ENCODE measurements at regions of chr1 and their contacts with region 1.

Region 1: DNA sequence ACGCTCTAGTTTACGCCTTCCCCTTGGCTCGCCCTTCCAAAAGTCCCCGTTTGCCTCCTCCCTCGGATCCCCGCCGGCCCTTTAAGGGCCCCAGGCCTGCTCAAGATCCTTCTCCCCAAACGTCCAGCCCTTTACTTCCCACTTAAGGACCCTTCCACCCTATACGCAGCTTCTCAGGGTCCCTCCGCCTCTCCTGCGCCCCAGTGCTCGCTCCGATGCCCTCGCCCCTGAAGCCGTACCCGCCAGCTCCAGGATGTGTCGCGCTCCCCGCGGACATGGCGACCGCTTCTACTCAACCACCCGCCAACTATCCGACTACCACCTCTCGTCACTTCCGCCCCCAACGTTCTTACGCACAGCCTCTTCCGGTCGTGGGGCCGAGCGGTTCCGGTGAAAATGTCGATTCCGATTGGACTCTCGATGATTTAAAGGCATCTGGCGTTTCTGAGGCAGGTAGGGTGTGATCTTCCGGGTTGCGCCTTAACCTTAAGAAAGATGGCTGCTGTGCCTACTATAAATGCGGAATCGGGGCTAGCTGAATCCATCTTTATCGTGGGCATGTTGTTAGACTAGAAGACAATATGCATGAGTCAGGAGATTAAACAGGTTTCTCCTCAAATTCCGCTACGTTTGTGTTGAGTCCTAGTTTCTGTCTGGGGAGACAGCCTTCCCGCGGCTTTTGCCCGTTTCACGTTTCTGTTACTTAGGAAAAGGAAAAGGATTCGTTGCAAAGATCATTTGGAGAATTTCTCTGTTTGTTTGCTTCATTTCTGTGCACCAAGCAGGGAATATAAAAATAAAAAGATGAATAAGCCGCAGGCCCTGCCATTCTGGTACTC is at the start of gene KHDC4:
- DNase-seq: peak; percentile 97
- ATAC-seq: peak; percentile 95
- H3K4me3 ChIP-seq: peak within 1 kb of the TSS; percentile 68 to 90
- H3K27ac ChIP-seq: peak within 1 kb of the TSS; percentile 64 to 73
- H3K4me1 ChIP-seq: peaks cover 0 to 2% of the 10 kb centered on the region in 2 donors
- H3K27me3 ChIP-seq: no peaks in the 10 kb centered on the region
- total RNA-seq, gene KHDC4: 47.0 to 60.5 TPM

Region 2: DNA sequence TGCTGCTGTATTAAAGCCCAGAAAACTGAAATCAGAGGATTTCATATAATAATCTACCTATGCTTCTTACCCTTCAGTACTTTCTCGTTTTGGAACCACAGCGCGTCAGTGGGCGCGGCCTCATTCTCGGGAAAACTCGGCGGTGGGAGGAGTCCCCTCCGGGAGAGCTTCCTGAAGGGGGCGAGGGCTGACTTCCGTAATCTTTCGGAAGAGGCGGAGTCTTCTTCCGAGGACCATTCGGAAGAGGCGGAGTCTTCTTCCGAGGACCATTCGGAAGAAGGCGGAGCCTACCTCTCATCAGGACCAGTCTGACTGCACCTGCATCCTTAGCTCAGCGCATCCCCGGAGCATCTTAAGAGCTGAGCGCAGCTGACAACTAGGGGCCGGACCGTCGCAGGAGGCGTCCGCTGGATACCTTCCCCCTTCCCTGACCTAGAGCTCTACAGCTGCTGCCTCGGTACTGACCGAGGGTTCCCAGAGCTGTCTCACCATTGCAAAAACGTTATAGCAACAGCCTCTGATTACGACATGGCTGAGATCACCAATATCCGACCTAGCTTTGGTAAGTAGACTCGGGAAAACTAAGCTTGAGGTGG is 75.0 kb before region 1 on chr1 and contains the start of gene SYT11:
- intact Hi-C with region 1: loop called in 1 of 2 experiments (anchors 5 kb)
- DNase-seq: peak; percentile 97 to 98
- ATAC-seq: peak; percentile 95
- H3K4me3 ChIP-seq: peak within 1 kb of the TSS; percentile 22 to 30
- H3K27ac ChIP-seq: peak within 1 kb of the TSS; percentile 45 to 74
- H3K4me1 ChIP-seq: no peaks in the 10 kb centered on the region
- H3K27me3 ChIP-seq: no peaks in the 10 kb centered on the region
- total RNA-seq, gene SYT11: 42.8 to 49.5 TPM

Region 3: DNA sequence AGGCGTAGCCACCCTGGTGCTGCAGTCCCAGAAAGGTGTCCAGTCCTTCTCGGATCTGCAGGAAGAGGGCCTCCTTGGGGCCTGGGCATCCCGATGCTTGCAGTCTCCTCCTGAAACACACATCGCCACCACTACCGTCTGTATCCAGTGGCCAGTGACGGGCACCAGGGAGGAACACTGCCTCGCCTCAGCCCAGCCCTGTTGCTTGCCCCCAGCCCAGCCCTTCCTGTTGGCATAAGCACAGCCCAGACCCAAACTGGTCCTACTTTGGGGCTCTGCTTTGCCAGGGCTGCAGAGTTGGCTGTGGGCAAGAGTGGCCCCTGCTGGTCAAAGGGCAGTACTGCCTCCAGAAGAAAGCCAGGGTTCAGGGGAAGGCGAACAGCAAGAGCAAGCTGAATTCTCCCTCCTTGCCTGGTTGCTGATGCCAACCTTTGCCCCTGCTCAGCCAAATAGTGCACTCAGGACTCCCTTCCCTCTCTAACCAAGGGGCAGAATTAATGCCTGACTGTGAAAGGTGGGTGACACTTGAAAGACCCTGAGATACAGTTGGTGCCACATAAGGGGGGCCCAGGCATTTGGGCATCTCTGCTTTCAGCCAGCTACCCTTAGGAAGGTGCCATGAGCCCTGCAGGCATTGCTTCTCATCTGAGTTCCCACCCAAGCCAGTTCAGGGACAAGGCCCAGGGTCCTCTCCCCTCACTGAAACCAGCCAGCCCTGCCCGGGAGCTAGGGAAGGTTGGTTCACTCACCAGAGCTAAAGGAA is 55.1 kb after region 1 on chr1:
- intact Hi-C with region 1: loop called (anchors 1 to 2 kb)
- DNase-seq: peak; percentile 87 to 89
- ATAC-seq: peak; percentile 97
- H3K4me3 ChIP-seq: peak overlapping the region; percentile 17 to 39
- H3K27ac ChIP-seq: peak overlapping the region; percentile 14 to 66
- H3K4me1 ChIP-seq: no peaks in the 10 kb centered on the region
- H3K27me3 ChIP-seq: no peaks in the 10 kb centered on the region

Region 4: DNA sequence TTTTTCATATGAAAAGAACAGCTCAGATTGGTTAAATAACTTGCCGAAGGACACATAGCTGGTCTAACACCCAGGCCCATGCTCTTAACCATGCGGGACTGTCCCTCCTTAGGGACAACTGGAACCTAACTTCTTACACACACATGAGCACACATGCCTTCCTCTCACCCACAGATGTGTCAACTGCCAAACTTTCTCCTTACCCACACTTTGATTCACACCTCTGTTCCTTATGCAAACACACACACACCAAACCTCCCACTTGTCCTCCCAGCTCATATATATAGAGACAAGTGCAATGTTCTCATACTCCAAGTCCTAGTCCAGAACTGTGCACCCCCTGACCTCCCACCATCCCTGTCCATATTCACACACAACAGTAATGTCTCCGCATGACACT is 130.9 kb after region 1 on chr1:
- intact Hi-C with region 1: loop called in 1 of 2 experiments (anchors 5 kb)
- DNase-seq: no peak
- ATAC-seq: no peak
- H3K4me3 ChIP-seq: no peak overlapping the region
- H3K27ac ChIP-seq: no peak overlapping the region
- H3K4me1 ChIP-seq: no peaks in the 10 kb centered on the region
- H3K27me3 ChIP-seq: no peaks in the 10 kb centered on the region

Measured in aorta (tissue), 5 donors.